ENCODE measurements at regions of chr7 and their contacts with region 1.

Region 1: DNA sequence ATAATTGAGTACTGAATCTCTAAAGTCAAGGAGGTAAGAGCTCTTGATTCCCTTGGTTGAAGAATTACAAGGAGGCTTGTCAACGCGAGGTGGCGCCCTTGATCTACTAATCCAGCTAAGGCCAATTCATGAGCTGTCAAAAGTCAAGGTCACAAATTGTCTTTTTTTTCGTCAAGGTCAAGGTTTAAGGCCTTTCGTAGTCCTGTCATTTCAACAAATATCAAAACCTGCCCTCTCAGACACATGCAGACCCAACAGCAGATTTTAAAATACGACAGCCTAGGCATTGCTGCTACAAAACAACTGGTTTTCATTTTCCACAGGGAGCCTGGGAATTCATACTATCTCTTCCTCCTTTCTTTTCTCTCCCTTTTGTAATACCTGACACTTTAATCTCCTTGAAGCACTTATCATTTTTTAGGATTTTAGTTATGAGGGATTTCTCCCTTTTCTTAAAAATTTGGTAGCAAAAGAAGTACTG is 3.6 kb downstream of the HOXA13 start:
- DNase-seq: peak; percentile 58 to 79
- ATAC-seq: no peak
- H3K4me3 ChIP-seq: no peak overlapping the region
- H3K27ac ChIP-seq: no peak overlapping the region
- H3K4me1 ChIP-seq: peaks cover 15% of the 10 kb centered on the region
- CTCF ChIP-seq: peak; percentile 96
- EP300 ChIP-seq: no peak
- POLR2A ChIP-seq: no peak
- RAD21 ChIP-seq: peak; percentile 97 to 98

Region 2: GRCh38 chr7:27053153-27053552 is 143.2 kb before region 1 on chr7:
- CTCF ChIA-PET with region 1: no interaction called
- POLR2A ChIA-PET with region 1: no interaction called
- DNase-seq: no peak
- ATAC-seq: peak; percentile 39 to 82; a peak in 4 of 6 replicates
- H3K4me3 ChIP-seq: no peak overlapping the region
- H3K27ac ChIP-seq: peak overlapping the region in 1 of 2 experiments; percentile 25; a peak in 1 of 6 replicates
- H3K4me1 ChIP-seq: 0 out of 3 replicates have a peak, but pooled peaks cover 5% of the 10 kb centered on the region
- CTCF ChIP-seq: no peak
- EP300 ChIP-seq: no peak
- POLR2A ChIP-seq: no peak
- RAD21 ChIP-seq: no peak

Region 3: DNA sequence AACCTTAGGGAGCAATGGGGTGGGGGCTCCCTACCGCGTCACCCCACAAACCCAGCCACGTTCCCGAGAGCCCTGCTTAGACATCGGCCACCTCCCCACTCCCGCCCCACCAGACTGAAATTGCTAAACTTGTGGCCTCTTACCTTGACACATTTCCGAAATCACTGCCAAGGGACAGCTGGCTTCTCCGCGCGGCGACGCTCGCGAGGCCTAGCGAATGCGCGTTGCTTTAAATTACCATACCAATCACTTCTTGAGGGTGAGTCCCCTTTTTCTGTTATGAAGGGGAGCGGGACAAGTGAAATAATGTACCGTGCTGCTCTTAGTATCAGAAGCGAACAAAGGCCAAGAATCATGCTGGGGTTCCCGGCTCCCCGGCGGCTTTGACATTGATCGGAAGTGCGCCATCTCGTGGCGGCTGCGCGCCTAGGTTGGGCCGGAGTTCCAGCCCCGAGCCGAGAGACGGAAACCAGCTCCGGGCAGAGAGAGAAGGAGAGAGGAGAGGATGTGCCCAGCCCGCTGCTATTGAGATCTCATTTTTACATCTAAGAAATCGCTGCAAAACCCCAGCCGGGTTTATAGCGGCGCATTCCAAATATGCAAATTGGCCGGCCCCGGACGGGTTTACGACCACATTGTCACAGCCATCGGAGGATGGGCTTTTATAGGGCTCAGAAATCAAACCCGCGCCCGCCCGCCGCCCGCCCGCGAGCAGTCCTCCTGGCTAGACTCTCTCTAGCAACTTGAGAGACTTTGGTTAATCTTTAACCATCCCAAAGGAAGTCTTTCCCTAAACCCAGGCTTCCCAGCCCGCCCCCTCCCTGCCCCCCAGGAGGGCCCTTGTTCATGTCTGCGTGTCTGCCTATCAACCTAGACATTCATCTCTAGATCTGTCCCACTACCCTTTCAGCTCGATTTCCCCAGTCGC is 16.6 kb before region 1 on chr7:
- CTCF ChIA-PET with region 1: interaction called, 30 read pairs
- POLR2A ChIA-PET with region 1: interaction called, 4 read pairs
- DNase-seq: peak; percentile 85 to 95
- ATAC-seq: peak; percentile 85 to 94
- H3K4me3 ChIP-seq: peak overlapping the region; percentile 56
- H3K27ac ChIP-seq: peak overlapping the region; percentile 84 to 87
- H3K4me1 ChIP-seq: peaks cover 21% of the 10 kb centered on the region
- CTCF ChIP-seq: peak; percentile 84
- EP300 ChIP-seq: no peak
- POLR2A ChIP-seq: peak; percentile 31; the same call in 1 of the 2 replicates
- RAD21 ChIP-seq: peak; percentile 10 to 36; a peak in 1 of 5 replicates

Region 4: DNA sequence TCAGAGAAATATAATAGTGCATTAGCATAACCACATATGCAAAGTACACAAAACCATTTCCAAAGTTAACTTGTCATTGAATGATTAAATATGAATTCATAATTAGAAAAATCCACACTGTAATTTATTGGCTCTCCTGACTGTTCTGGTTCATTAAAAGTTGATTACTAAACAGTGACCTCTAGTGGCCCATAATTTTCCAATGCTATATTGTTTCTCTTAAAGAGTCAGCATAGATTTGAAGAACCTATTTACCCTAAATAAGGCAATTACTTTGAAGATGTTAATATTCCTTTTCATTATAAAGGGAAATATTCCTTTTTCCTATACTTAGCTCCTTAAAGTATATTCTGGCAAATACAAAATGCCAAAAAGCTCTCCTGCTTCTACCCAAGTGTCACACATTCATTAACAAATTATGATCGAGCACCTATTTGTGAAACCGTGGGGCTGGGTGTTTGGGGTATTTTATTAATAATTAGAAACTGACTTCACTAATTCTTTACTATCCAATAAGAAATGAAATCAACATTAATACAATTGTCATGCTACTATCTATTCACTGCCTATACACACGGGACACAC is 380.1 kb after region 1 on chr7:
- CTCF ChIA-PET with region 1: interaction called, 12 read pairs
- POLR2A ChIA-PET with region 1: no interaction called
- DNase-seq: peak; percentile 14 to 38
- ATAC-seq: peak; percentile 47 to 78; a peak in 4 of 6 replicates
- H3K4me3 ChIP-seq: no peak overlapping the region
- H3K27ac ChIP-seq: no peak overlapping the region
- H3K4me1 ChIP-seq: peaks cover 7% of the 10 kb centered on the region; the same call in 2 of the 3 replicates
- CTCF ChIP-seq: peak; percentile 85
- EP300 ChIP-seq: no peak
- POLR2A ChIP-seq: no peak
- RAD21 ChIP-seq: peak; percentile 74 to 83

Region 5: DNA sequence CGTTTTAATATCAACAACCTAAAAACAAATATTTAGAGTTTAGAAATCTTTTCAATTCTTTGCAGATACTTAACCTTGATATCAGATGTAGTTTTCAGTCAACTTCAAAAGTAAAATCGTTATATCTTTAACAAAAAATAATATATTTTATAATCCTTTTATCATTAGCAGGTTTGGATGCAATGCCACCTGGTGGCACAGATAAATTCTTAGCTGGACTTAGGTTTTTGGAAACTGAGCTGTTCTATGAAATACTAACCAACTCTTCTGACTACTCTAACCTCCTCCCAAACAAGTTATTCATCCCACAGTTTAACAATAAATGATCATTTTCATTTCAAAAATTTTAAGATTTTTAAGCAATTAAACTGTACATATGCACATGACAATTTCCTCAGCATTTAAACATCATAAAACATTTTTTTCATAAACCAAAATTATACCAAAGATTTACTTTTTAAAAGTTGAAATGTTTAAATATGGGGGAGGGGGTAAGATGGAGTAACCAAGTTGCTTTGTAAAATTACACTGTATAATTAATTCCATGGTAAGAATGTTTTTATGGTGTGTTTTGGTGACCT is 409.5 kb after region 1 on chr7:
- CTCF ChIA-PET with region 1: interaction called, 25 read pairs
- POLR2A ChIA-PET with region 1: no interaction called
- DNase-seq: peak; percentile 22 to 55
- ATAC-seq: peak in 1 of 2 experiments; percentile 83; a peak in 4 of 6 replicates
- H3K4me3 ChIP-seq: peak overlapping the region; percentile 44
- H3K27ac ChIP-seq: peak overlapping the region; percentile 53 to 79
- H3K4me1 ChIP-seq: peaks cover 68% of the 10 kb centered on the region
- CTCF ChIP-seq: peak; percentile 84
- EP300 ChIP-seq: no peak
- POLR2A ChIP-seq: no peak
- RAD21 ChIP-seq: peak; percentile 54 to 73

Region 6: GRCh38 chr7:27774717-27775328 is 578.5 kb after region 1 on chr7:
- CTCF ChIA-PET with region 1: interaction called, 19 read pairs
- POLR2A ChIA-PET with region 1: no interaction called
- DNase-seq: peak in 1 of 2 experiments; percentile 55
- ATAC-seq: peak in 1 of 2 experiments; percentile 67; a peak in 3 of 6 replicates
- H3K4me3 ChIP-seq: no peak overlapping the region
- H3K27ac ChIP-seq: no peak overlapping the region
- H3K4me1 ChIP-seq: peaks cover 26% of the 10 kb centered on the region
- CTCF ChIP-seq: peak; percentile 88
- EP300 ChIP-seq: no peak
- POLR2A ChIP-seq: no peak
- RAD21 ChIP-seq: peak; percentile 84 to 88

Region 7: GRCh38 chr7:27921081-27921836 is 724.9 kb after region 1 on chr7:
- CTCF ChIA-PET with region 1: interaction called, 34 read pairs
- POLR2A ChIA-PET with region 1: interaction called, 6 read pairs
- DNase-seq: peak; percentile 49 to 82
- ATAC-seq: peak; percentile 79 to 90
- H3K4me3 ChIP-seq: 0 out of 3 replicates have a peak overlapping the region, but pooled peaks have one; percentile 1
- H3K27ac ChIP-seq: peak overlapping the region; percentile 43 to 71; a peak in 5 of 6 replicates
- H3K4me1 ChIP-seq: peaks cover 37% of the 10 kb centered on the region
- CTCF ChIP-seq: peak; percentile 84
- EP300 ChIP-seq: no peak
- POLR2A ChIP-seq: no peak
- RAD21 ChIP-seq: peak; percentile 88 to 94

Region 8: GRCh38 chr7:28029051-28029450 is 832.7 kb after region 1 on chr7:
- CTCF ChIA-PET with region 1: interaction called, 10 read pairs
- POLR2A ChIA-PET with region 1: no interaction called
- DNase-seq: peak in 1 of 2 experiments; percentile 49
- ATAC-seq: peak in 1 of 2 experiments; percentile 69; a peak in 3 of 6 replicates
- H3K4me3 ChIP-seq: no peak overlapping the region
- H3K27ac ChIP-seq: peak overlapping the region; percentile 81 to 90
- H3K4me1 ChIP-seq: peaks cover 56% of the 10 kb centered on the region
- CTCF ChIP-seq: no peak
- EP300 ChIP-seq: peak; percentile 32 to 73; a peak in 2 of 5 replicates
- POLR2A ChIP-seq: no peak
- RAD21 ChIP-seq: no peak